Activated T-helper 2 cell treated with anti-CD3 and anti-CD28 coated beads, Interferon-gamma antibody, Interleukin-2, Interleukin-4, amounts not matched to agents 10 μg/mL and 5 μg/mL and 100 μg/mL, durations not matched to agents 14 hours and 24 hours and 36 hours (primary cell): ENCODE measurements at regions of chr14 and their contacts with region 1.

Region 1: DNA sequence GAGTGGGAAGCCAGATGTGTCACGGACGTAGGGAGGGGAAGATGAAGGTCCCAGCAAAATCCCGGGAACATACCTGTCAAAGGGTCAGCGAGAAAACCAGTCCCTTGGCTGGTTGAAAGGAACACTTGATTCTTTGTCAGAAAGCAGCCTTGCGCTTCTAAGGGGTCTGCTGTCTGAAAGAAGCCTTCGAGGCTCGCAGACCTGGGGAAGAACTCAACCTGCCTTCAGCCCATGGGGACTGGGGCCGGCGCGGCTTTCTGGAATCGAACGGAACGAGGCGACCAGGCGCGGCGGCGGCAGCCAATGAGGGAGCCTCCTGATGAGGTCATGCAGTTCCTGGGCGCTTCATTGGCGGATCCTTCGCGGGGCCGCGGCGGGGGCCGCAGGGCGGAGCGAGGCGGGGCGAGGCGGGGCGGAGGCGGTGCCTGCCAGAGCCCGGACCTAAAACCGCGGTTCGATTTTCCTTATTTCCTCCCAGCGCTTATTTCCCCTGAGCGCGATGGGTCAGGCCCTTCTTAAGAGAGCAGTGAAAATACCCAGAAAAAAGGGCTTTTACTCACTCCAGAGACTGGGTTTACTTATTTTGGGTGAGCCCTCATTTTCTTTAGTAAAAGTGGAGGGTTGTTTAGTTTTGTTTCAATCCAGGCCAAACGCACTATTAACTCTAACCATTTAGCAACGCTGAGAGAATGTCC is 11.8 kb upstream of the TTC7B start:
- DNase-seq: peak; percentile 91
- H3K4me3 Mint-ChIP-seq: peak overlapping the region; percentile 76
- H3K27ac Mint-ChIP-seq: peak overlapping the region; percentile 92
- H3K4me1 Mint-ChIP-seq: peaks cover 20% of the 10 kb centered on the region
- H3K27me3 Mint-ChIP-seq: no peaks in the 10 kb centered on the region

Region 2: DNA sequence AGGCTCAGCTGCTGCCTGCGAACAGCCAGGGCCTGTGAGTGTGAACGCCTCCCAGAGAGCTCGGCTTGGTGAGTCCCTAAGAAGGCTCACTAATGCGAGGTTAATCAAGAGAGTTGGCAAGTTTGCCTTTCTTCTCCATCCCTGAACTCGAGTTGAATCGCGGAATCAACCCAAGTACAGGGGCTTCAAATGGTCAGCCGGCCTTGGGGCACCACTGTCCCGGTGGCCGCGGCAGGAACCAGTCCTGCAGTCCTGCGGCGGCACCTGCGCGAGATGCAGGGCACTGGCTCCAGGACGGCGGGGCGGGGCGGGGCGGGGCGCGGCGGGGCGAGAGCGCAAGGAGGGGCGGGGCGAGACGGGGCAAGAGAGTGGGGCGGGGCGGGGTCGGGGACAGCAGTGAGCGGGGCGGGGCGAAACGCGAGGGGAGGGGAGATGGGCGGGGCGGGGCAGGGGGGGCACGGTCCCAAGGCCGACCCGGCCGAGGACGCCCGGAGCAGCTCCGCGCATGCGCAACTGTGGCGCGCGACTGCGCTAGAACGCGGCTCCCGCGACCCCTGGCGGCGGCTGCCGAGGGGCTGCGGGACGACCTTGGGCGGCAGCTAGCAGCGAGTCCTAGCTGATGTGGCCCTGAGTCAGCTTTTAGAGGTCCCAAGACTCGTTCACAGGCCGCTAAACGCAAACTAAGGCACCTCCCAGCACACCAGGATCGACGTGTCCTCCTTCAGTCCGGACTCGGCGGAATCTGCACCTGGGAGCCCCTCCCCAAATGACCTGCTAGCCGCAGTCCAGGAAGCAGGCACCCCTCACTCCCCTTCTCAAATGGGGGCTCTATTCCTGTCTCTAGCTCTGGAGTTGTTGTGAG is 69.8 kb before region 1 on chr14:
- intact Hi-C with region 1: loop called (anchors 2 kb)
- DNase-seq: peak; percentile 92
- H3K4me3 Mint-ChIP-seq: peak overlapping the region; percentile 70
- H3K27ac Mint-ChIP-seq: peak overlapping the region; percentile 68
- H3K4me1 Mint-ChIP-seq: peaks cover 18% of the 10 kb centered on the region
- H3K27me3 Mint-ChIP-seq: peaks cover 19% of the 10 kb centered on the region